Natural killer cell (primary cell): ENCODE measurements at regions of chr7 and their contacts with region 1.

Region 1: DNA sequence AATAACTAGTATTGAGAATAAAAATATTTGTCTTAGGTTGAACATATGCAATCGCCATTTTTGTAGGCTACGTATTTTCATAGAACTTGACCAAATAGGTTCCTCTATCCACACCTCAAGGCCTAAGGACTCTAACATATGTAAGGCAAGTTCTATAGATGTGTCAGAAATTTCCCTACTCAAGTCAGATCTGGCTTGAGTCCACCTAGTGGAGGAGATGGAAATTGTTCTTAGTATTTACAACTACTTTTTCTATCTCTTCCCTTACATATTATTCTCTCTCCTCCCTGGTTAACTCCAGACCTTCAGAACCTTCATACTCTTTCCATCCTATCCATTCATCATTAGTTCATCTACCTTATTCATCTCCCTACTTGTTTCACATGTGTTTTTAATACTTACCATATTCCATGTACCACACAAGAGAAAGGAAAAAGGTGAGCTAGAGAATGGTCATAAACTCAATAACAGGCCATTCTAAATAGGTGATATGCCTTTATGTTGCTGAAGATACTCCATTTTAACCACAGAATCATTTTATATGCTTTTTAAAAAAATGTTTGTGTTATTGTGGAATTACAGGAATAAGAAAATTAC is 174.5 kb upstream of the HDAC9 start:
- DNase-seq: peak in 1 of 2 donors; percentile 59
- ATAC-seq: peak; percentile 63 to 84 (median 82)
- H3K4me3 ChIP-seq: no peak overlapping the region
- H3K4me3 Mint-ChIP-seq: no peak overlapping the region
- H3K27ac ChIP-seq: no peak overlapping the region
- H3K27ac Mint-ChIP-seq: no peak overlapping the region
- H3K4me1 ChIP-seq: peaks cover 2% of the 10 kb centered on the region
- H3K4me1 Mint-ChIP-seq: peaks cover 36 to 61% of the 10 kb centered on the region in 2 donors
- H3K27me3 ChIP-seq: no peaks in the 10 kb centered on the region
- H3K27me3 Mint-ChIP-seq: no peaks in the 10 kb centered on the region
- CTCF ChIP-seq: peak; percentile 73

Region 2: GRCh38 chr7:18053177-18053928 is 267.7 kb before region 1 on chr7:
- intact Hi-C with region 1: no loop called
- DNase-seq: no peak
- ATAC-seq: no peak
- H3K4me3 ChIP-seq: no peak overlapping the region
- H3K4me3 Mint-ChIP-seq: no peak overlapping the region
- H3K27ac ChIP-seq: no peak overlapping the region
- H3K27ac Mint-ChIP-seq: no peak overlapping the region
- H3K4me1 ChIP-seq: no peaks in the 10 kb centered on the region
- H3K4me1 Mint-ChIP-seq: no peaks in the 10 kb centered on the region
- H3K27me3 ChIP-seq: no peaks in the 10 kb centered on the region
- H3K27me3 Mint-ChIP-seq: peaks cover 0 to 3% of the 10 kb centered on the region in 2 donors
- CTCF ChIP-seq: no peak

Region 3: DNA sequence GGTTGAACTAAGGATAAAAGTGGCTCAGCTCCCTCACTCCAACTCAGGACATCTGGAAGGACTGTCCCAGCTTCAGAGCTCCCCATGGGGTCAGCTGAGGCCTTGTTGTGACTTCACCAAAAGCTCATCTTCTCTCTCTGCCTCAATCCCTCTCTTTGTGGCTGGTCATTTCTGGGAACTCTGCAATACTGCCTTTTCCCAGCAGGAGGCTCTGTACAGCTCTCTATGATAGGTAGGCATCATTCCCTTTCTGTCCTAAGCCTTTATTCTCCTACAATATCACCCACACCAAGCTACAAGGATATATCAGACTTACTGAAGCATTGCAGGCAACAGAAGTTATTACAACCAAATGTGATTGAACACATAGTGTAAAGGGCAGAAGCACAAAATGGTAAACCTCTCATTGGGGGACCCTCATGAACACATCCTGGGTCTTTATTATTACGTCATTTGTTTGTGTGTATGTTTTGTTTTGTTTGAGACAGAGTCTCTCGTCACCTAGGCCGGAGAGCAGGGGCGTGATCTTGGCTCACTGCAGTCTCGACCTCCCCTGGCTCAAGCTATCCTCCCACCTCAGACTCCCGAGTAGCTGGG is 256.7 kb before region 1 on chr7:
- intact Hi-C with region 1: loop called (anchors 10 kb)
- DNase-seq: peak in 1 of 2 donors; percentile 12
- ATAC-seq: peak in 2 of 3 donors; percentile 49 to 56
- H3K4me3 ChIP-seq: no peak overlapping the region
- H3K4me3 Mint-ChIP-seq: no peak overlapping the region
- H3K27ac ChIP-seq: no peak overlapping the region
- H3K27ac Mint-ChIP-seq: no peak overlapping the region
- H3K4me1 ChIP-seq: no peaks in the 10 kb centered on the region
- H3K4me1 Mint-ChIP-seq: no peaks in the 10 kb centered on the region
- H3K27me3 ChIP-seq: no peaks in the 10 kb centered on the region
- H3K27me3 Mint-ChIP-seq: no peaks in the 10 kb centered on the region
- CTCF ChIP-seq: peak; percentile 48

Region 4: GRCh38 chr7:18119985-18120384 is 201.1 kb before region 1 on chr7:
- intact Hi-C with region 1: no loop called
- DNase-seq: peak in 1 of 2 donors; percentile 1
- ATAC-seq: no peak
- H3K4me3 ChIP-seq: no peak overlapping the region
- H3K4me3 Mint-ChIP-seq: no peak overlapping the region
- H3K27ac ChIP-seq: no peak overlapping the region
- H3K27ac Mint-ChIP-seq: no peak overlapping the region
- H3K4me1 ChIP-seq: no peaks in the 10 kb centered on the region
- H3K4me1 Mint-ChIP-seq: no peaks in the 10 kb centered on the region
- H3K27me3 ChIP-seq: no peaks in the 10 kb centered on the region
- H3K27me3 Mint-ChIP-seq: peaks cover 0 to 3% of the 10 kb centered on the region in 2 donors
- CTCF ChIP-seq: no peak

Region 5: DNA sequence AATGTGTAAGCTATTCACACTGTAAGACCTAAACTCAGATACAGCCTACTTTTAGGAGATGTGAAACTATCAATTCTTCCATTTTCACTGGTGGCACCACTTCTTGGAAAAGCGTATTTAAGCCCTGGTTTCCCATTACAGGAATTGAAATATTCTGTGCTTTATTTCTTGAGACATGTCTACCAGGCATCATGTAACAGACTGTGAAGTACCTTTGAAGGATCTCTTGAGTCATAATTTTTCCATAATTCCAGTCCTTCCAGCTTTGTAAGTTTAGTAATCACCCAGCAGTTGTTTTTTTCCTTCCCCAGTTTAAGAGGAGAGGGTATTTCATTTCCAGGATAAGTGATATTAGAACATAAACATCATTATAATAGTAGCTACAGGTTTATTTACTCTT is 107.4 kb before region 1 on chr7:
- intact Hi-C with region 1: loop called (anchors 2 kb)
- DNase-seq: no peak
- ATAC-seq: no peak
- H3K4me3 ChIP-seq: no peak overlapping the region
- H3K4me3 Mint-ChIP-seq: no peak overlapping the region
- H3K27ac ChIP-seq: no peak overlapping the region
- H3K27ac Mint-ChIP-seq: no peak overlapping the region
- H3K4me1 ChIP-seq: no peaks in the 10 kb centered on the region
- H3K4me1 Mint-ChIP-seq: peaks cover 0 to 5% of the 10 kb centered on the region in 2 donors
- H3K27me3 ChIP-seq: no peaks in the 10 kb centered on the region
- H3K27me3 Mint-ChIP-seq: no peaks in the 10 kb centered on the region
- CTCF ChIP-seq: no peak

Region 6: GRCh38 chr7:18508443-18509427 is 187.7 kb after region 1 on chr7:
- intact Hi-C with region 1: no loop called
- DNase-seq: peak in 1 of 2 donors; percentile 20
- ATAC-seq: peak in 2 of 3 donors; percentile 37 to 59
- H3K4me3 ChIP-seq: no peak overlapping the region
- H3K4me3 Mint-ChIP-seq: no peak overlapping the region
- H3K27ac ChIP-seq: peak overlapping the region; percentile 70
- H3K27ac Mint-ChIP-seq: peak overlapping the region in 1 of 2 donors; percentile 32
- H3K4me1 ChIP-seq: no peaks in the 10 kb centered on the region
- H3K4me1 Mint-ChIP-seq: peaks cover 15 to 17% of the 10 kb centered on the region in 2 donors
- H3K27me3 ChIP-seq: no peaks in the 10 kb centered on the region
- H3K27me3 Mint-ChIP-seq: no peaks in the 10 kb centered on the region
- CTCF ChIP-seq: no peak